ENCODE measurements at regions of chr17 and their contacts with region 1.

Region 1: GRCh38 chr17:80751070-80751945 is 206.7 kb downstream of the RPTOR start:
- DNase-seq: no peak
- ATAC-seq: peak in 1 of 2 donors; percentile 29
- H3K4me3 Mint-ChIP-seq: peak overlapping the region in 6 of 10 donors; percentile 34 to 80 (median 68)
- H3K27ac Mint-ChIP-seq: peak overlapping the region; percentile 71 to 97 (median 90)
- H3K4me1 Mint-ChIP-seq: peaks cover 31 to 65% (median 50%) of the 10 kb centered on the region in 4 donors
- H3K27me3 Mint-ChIP-seq: no peaks in the 10 kb centered on the region

Region 2: DNA sequence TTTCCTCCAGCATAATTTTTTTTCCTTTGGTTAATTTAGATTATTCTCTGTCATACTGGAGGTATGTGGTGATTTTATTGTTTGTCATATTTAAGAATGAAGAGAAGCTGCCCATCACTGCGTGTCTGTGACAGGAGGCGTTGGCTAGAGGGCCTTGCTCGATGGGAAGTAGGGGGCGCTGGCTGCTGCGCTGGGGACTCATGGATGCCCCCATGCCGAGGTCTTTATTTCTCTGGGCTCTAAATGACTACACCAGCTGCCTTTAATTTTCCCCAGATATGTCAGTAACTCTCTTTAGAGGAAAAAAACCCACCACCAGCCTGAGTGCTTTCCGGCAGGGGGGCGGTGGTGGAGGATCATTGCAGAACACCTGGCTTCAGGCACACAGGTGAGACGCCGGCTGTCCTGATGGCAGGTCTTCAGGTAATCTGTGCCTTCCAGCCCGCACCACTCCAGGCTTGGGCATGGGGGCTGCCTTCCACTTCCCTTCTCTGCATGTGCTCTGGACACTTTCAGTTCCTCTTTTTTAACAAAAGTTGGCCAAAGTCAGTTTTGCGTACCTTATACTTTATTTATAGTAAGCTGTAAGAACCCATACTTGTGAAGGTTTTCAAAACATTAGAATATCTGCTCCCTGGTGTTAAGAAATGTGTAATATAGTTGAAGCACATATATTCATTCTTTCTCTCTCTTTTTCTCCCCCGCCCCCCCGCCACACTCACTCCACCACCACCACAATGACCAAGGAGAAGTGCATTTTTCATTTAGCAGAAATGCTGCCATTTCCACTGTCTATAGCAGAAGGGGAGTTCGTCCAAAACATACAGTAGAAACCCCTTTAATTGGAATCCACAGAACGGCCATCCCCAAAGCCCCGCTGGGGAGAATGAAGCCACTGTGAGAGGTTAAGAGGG is 13.9 kb before region 1 on chr17:
- POLR2A ChIA-PET with region 1: interaction called, 13 read pairs
- DNase-seq: no peak
- ATAC-seq: peak in 1 of 2 donors; percentile 16
- H3K4me3 Mint-ChIP-seq: peak overlapping the region in 6 of 10 donors; percentile 10 to 63 (median 48)
- H3K27ac Mint-ChIP-seq: peak overlapping the region; percentile 48 to 97 (median 92)
- H3K4me1 Mint-ChIP-seq: peaks cover 39 to 75% (median 69%) of the 10 kb centered on the region in 4 donors
- H3K27me3 Mint-ChIP-seq: no peaks in the 10 kb centered on the region